ENCODE measurements at regions of chr16 and their contacts with region 1.

Region 1: GRCh38 chr16:82169861-82170845 is at the start of gene MPHOSPH6:
- DNase-seq: peak; percentile 97
- H3K4me3 Mint-ChIP-seq: peak within 1 kb of the TSS; percentile 91
- H3K27ac Mint-ChIP-seq: peak within 1 kb of the TSS; percentile 96
- H3K4me1 Mint-ChIP-seq: peaks cover 15% of the 10 kb centered on the region
- H3K27me3 Mint-ChIP-seq: peaks cover 33% of the 10 kb centered on the region
- total RNA-seq, gene MPHOSPH6: 54.1 and 54.8 TPM in 2 replicates

Region 2: GRCh38 chr16:82133798-82134197 is 36.4 kb before region 1 on chr16:
- intact Hi-C with region 1: loop called (anchors 5 kb)
- DNase-seq: peak; percentile 75
- H3K4me3 Mint-ChIP-seq: peak overlapping the region; percentile 56
- H3K27ac Mint-ChIP-seq: no peak overlapping the region
- H3K4me1 Mint-ChIP-seq: peaks cover 15% of the 10 kb centered on the region
- H3K27me3 Mint-ChIP-seq: peaks cover 1% of the 10 kb centered on the region

Region 3: DNA sequence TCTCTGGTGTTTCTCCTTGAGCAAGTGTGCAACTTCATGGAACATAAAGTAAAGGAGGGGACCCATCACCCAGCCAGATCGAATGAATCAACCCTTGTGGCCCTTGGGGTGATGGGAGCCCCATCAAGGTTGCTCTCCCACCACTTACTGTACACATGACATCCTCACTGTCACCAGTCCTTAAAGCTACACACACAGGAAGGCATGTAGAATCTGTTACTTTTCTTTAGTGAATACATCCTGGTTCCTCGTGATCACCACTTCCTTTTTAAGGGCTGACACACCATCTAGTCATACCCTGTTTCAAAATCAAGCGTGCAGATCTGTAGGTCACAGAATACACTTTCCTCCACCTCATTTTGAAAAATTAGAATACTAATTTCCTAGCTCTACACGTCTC is 22.5 kb after region 1 on chr16:
- intact Hi-C with region 1: loop called (anchors 1 kb)
- DNase-seq: peak; percentile 77
- H3K4me3 Mint-ChIP-seq: peak overlapping the region; percentile 41
- H3K27ac Mint-ChIP-seq: peak overlapping the region; percentile 89
- H3K4me1 Mint-ChIP-seq: peaks cover 21% of the 10 kb centered on the region
- H3K27me3 Mint-ChIP-seq: peaks cover 7% of the 10 kb centered on the region

Measured in activated CD4-positive, alpha-beta T cell treated with anti-CD3 and anti-CD28 coated beads, Interleukin-2, amount 10 ng/mL, durations not matched to agents 24 days and 14 days (primary cell).